Mammary epithelial cell (primary cell): ENCODE measurements at regions of chr1 and their contacts with region 1.

Region 1: DNA sequence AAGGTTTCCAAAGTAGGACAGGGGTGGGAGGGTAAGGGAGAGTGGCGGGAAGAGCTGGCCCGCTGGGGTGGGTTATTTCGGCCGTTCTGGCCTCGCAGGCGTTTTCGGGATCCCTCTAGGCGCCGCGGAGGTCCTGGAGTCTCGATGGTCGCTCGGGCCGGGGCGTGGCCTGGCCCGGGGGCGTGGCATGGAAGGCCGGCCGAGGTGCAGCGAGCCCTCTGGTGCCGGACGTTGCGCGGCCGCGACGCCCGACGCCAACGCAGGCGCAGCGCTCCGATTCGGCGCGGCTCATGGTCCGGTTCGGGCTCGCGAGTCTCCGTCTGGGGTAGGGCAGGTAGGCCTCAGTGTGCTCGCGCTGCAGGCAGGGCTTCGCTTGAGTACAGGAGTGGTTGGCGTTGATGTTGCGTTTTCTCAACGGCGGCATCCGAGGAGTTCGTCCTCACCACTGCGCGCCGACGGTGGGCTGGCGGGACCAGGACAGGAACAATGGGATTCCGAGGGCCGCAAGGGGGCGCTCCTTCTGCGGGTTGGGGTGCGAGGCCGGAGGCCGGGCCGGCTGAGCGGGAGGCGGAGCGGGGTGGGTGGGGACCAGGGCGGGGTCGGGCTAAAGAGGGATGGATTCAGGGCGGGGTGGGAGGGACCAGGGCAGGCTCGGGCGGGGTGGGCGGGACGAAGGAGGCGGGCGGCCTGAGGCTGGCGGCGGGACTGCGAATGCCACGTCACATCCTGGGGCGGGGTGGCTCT is at the start of gene PGBD2:
- DNase-seq: peak; percentile 88
- H3K4me3 ChIP-seq: peak within 1 kb of the TSS; percentile 72 to 79 (median 79)
- H3K27ac ChIP-seq: peak within 1 kb of the TSS; percentile 79
- H3K4me1 ChIP-seq: peaks cover 7% of the 10 kb centered on the region
- H3K27me3 ChIP-seq: no peaks in the 10 kb centered on the region
- CTCF ChIP-seq: peak; percentile 55 to 71
- total RNA-seq, gene PGBD2: 3.8 to 4.2 TPM

Region 2: GRCh38 chr1:248348475-248348874 is 557.7 kb before region 1 on chr1 and contains the start of gene OR14C36:
- CTCF ChIA-PET with region 1: no interaction called
- dilution Hi-C with region 1: no loop called
- in situ Hi-C with region 1: no loop called
- intact Hi-C with region 1: no loop called
- DNase-seq: no peak
- H3K4me3 ChIP-seq: no peak within 1 kb of the TSS
- H3K27ac ChIP-seq: no peak within 1 kb of the TSS
- H3K4me1 ChIP-seq: no peaks in the 10 kb centered on the region
- H3K27me3 ChIP-seq: no peaks in the 10 kb centered on the region
- CTCF ChIP-seq: no peak
- total RNA-seq, gene OR14C36: not detected

Region 3: GRCh38 chr1:248618878-248619277 is 287.3 kb before region 1 on chr1:
- CTCF ChIA-PET with region 1: no interaction called
- dilution Hi-C with region 1: no loop called
- in situ Hi-C with region 1: no loop called
- intact Hi-C with region 1: no loop called
- DNase-seq: peak; percentile 30
- H3K4me3 ChIP-seq: no peak overlapping the region
- H3K27ac ChIP-seq: no peak overlapping the region
- H3K4me1 ChIP-seq: no peaks in the 10 kb centered on the region
- H3K27me3 ChIP-seq: no peaks in the 10 kb centered on the region
- CTCF ChIP-seq: peak; percentile 57 to 72

Region 4: DNA sequence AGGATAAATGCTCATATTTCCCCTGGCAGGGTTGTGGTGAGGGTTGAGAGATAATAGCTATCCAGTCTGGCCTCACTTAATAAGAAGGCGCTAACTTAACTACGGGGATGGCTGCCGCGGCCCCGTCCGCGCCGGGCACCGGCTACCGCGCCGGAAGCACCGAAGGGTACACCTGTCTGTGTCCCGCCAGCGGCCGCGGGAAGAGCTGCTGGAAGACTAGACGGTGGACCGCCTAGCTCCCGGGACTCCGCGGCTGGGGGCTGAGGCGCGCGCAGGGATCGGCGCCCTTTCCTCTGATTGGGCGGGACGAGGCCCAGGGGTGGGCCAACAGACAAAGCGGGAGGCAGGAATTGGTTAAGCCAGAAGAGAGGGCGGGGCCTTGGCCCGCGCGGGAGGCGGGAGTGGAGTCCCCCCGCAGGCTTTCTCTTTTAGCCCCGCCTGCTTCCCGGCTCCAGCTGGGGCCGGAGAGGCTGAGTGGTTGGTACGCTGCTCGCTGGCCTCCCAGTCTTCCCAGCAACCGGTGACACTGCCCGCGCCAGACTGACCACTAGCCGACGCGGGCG is 68.3 kb before region 1 on chr1 and contains the start of gene ZNF672:
- CTCF ChIA-PET with region 1: no interaction called
- dilution Hi-C with region 1: no loop called
- in situ Hi-C with region 1: no loop called
- intact Hi-C with region 1: loop called (anchors 1 kb)
- DNase-seq: peak; percentile 97
- H3K4me3 ChIP-seq: peak within 1 kb of the TSS; percentile 76 to 94 (median 89)
- H3K27ac ChIP-seq: peak within 1 kb of the TSS; percentile 87
- H3K4me1 ChIP-seq: peaks cover 31% of the 10 kb centered on the region
- H3K27me3 ChIP-seq: no peaks in the 10 kb centered on the region
- CTCF ChIP-seq: no peak
- total RNA-seq, gene ZNF672: 20.5 to 22.5 TPM

Region 5: DNA sequence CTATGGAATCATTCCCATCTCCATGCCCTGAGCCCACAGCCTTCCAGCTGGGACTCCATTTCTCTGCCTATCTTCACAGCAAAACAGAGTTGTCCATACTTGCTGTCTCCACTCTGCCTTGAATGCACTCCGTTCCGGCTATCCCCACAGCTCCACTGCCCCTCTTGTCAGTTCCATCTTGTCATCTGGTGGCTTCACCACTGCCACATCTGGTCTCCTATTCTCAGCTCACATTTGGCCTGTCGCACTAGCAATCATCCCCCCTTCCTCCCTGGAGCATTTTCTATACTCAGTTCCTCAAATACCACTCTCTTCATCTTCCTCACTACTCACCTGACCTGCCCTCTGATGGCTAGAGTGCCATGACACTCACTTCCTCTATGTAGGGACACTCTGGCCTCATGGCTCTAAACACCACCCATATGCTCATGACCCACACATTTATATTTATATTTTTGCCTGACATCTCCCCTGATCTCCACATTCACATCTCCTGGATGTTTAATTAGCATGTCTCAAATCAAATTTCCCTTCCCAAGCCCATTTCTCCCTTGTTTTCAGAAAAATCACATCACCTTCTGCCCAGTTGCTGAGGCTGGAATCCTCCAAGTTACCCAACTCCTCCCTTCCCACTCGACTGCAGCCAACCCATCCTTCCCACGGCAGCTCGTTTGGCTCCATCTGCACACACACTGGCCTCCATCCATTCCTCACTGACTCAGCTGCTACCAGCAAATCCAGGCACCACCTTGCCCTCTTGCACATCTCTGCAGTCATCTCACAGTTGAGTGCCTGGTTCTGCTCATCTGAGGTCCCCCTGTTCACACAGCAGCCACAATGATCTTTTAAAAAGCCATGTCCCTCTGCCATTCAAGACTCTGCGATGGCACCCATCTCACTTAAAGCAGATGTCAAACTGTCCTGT is 53.4 kb before region 1 on chr1:
- CTCF ChIA-PET with region 1: no interaction called
- dilution Hi-C with region 1: no loop called
- in situ Hi-C with region 1: no loop called
- intact Hi-C with region 1: no loop called
- DNase-seq: no peak
- H3K4me3 ChIP-seq: no peak overlapping the region
- H3K27ac ChIP-seq: no peak overlapping the region
- H3K4me1 ChIP-seq: peaks cover 9% of the 10 kb centered on the region
- H3K27me3 ChIP-seq: no peaks in the 10 kb centered on the region
- CTCF ChIP-seq: no peak

Region 6: GRCh38 chr1:248873409-248873992 is 32.7 kb before region 1 on chr1:
- CTCF ChIA-PET with region 1: no interaction called
- dilution Hi-C with region 1: no loop called
- in situ Hi-C with region 1: no loop called
- intact Hi-C with region 1: loop called (anchors 1 kb)
- DNase-seq: peak; percentile 95
- H3K4me3 ChIP-seq: peak overlapping the region; percentile 66 to 83 (median 73)
- H3K27ac ChIP-seq: peak overlapping the region; percentile 75
- H3K4me1 ChIP-seq: peaks cover 3% of the 10 kb centered on the region
- H3K27me3 ChIP-seq: no peaks in the 10 kb centered on the region
- CTCF ChIP-seq: peak in 1 of 2 donors; percentile 14

Region 7: GRCh38 chr1:248884632-248885295 is 21.4 kb before region 1 on chr1:
- CTCF ChIA-PET with region 1: no interaction called
- dilution Hi-C with region 1: no loop called
- in situ Hi-C with region 1: no loop called
- intact Hi-C with region 1: no loop called
- DNase-seq: no peak
- H3K4me3 ChIP-seq: no peak overlapping the region
- H3K27ac ChIP-seq: no peak overlapping the region
- H3K4me1 ChIP-seq: no peaks in the 10 kb centered on the region
- H3K27me3 ChIP-seq: no peaks in the 10 kb centered on the region
- CTCF ChIP-seq: no peak

Region 8: GRCh38 chr1:248924696-248925532 is 18.7 kb after region 1 on chr1:
- CTCF ChIA-PET with region 1: no interaction called
- dilution Hi-C with region 1: no loop called
- in situ Hi-C with region 1: no loop called
- intact Hi-C with region 1: loop called (anchors 1 kb)
- DNase-seq: peak; percentile 43
- H3K4me3 ChIP-seq: no peak overlapping the region
- H3K27ac ChIP-seq: no peak overlapping the region
- H3K4me1 ChIP-seq: peaks cover 4% of the 10 kb centered on the region
- H3K27me3 ChIP-seq: no peaks in the 10 kb centered on the region
- CTCF ChIP-seq: peak; percentile 64 to 72